Heart right ventricle (tissue), 16 donors: ENCODE measurements at regions of chr10 and their contacts with region 1.

Region 1: GRCh38 chr10:109978481-109978880 is 29.3 kb upstream of the ADD3 start:
- DNase-seq: peak in 1 of 2 donors; percentile 54
- ATAC-seq: peak in 6 of 8 donors; percentile 31 to 59 (median 46)
- H3K4me3 ChIP-seq: peak overlapping the region in 1 of 10 donors; percentile 0
- H3K27ac ChIP-seq: peak overlapping the region in 7 of 10 donors; percentile 0 to 70 (median 11)
- H3K4me1 ChIP-seq: peaks cover 0 to 48% (median 9%) of the 10 kb centered on the region in 9 donors
- H3K27me3 ChIP-seq: no peaks in the 10 kb centered on the region
- CTCF ChIP-seq: peak; percentile 73 to 88 (median 78)

Region 2: GRCh38 chr10:110110338-110110737 is 131.9 kb after region 1 on chr10:
- intact Hi-C with region 1: loop called in 1 of 10 experiments (anchors 5 kb)
- DNase-seq: no peak
- ATAC-seq: peak in 1 of 8 donors; percentile 34
- H3K4me3 ChIP-seq: no peak overlapping the region
- H3K27ac ChIP-seq: no peak overlapping the region
- H3K4me1 ChIP-seq: peaks cover 0 to 18% (median 5%) of the 10 kb centered on the region in 9 donors
- H3K27me3 ChIP-seq: no peaks in the 10 kb centered on the region
- CTCF ChIP-seq: no peak